Naive thymus-derived CD4-positive, alpha-beta T cell (primary cell): ENCODE measurements at regions of chr17 and their contacts with region 1.

Region 1: GRCh38 chr17:45148183-45149036 is at the start of gene HEXIM1:
- DNase-seq: peak; percentile 98 to 100 (median 100)
- ATAC-seq: peak; percentile 87
- H3K4me3 ChIP-seq: peak within 1 kb of the TSS; percentile 93
- H3K4me3 Mint-ChIP-seq: peak within 1 kb of the TSS; percentile 89 to 100 (median 99)
- H3K27ac ChIP-seq: peak within 1 kb of the TSS; percentile 91
- H3K27ac Mint-ChIP-seq: peak within 1 kb of the TSS; percentile 99 to 100 (median 100)
- H3K4me1 ChIP-seq: peaks cover 21 to 35% of the 10 kb centered on the region in 2 donors
- H3K4me1 Mint-ChIP-seq: peaks cover 18 to 68% (median 54%) of the 10 kb centered on the region in 7 donors
- H3K27me3 ChIP-seq: no peaks in the 10 kb centered on the region
- H3K27me3 Mint-ChIP-seq: peaks cover 0 to 7% (median 0%) of the 10 kb centered on the region in 5 donors
- total RNA-seq, gene HEXIM1: 28.5 to 41.3 (median 37.6) TPM

Region 2: GRCh38 chr17:44186307-44187130 is 961.9 kb before region 1 on chr17 and contains the start of gene TMUB2:
- CTCF ChIA-PET with region 1: no interaction called
- POLR2A ChIA-PET with region 1: no interaction called
- intact Hi-C with region 1: loop called in 1 of 2 experiments (anchors 2 kb)
- DNase-seq: peak; percentile 99 to 100 (median 100)
- ATAC-seq: peak; percentile 99
- H3K4me3 ChIP-seq: peak within 1 kb of the TSS; percentile 100
- H3K4me3 Mint-ChIP-seq: peak within 1 kb of the TSS; percentile 94 to 100 (median 98)
- H3K27ac ChIP-seq: peak within 1 kb of the TSS; percentile 99
- H3K27ac Mint-ChIP-seq: peak within 1 kb of the TSS; percentile 97 to 100 (median 100)
- H3K4me1 ChIP-seq: peaks cover 23 to 35% of the 10 kb centered on the region in 2 donors
- H3K4me1 Mint-ChIP-seq: peaks cover 41 to 68% (median 51%) of the 10 kb centered on the region in 7 donors
- H3K27me3 ChIP-seq: no peaks in the 10 kb centered on the region
- H3K27me3 Mint-ChIP-seq: no peaks in the 10 kb centered on the region
- total RNA-seq, gene TMUB2: 34.9 to 56.0 (median 41.6) TPM

Region 3: GRCh38 chr17:45060797-45061605 is 87.4 kb before region 1 on chr17 and contains the start of gene NMT1:
- CTCF ChIA-PET with region 1: no interaction called
- POLR2A ChIA-PET with region 1: no interaction called
- intact Hi-C with region 1: loop called (anchors 1 kb)
- DNase-seq: peak; percentile 81 to 98 (median 98)
- ATAC-seq: peak; percentile 95
- H3K4me3 ChIP-seq: peak within 1 kb of the TSS; percentile 97
- H3K4me3 Mint-ChIP-seq: peak within 1 kb of the TSS; percentile 80 to 100 (median 98)
- H3K27ac ChIP-seq: peak within 1 kb of the TSS; percentile 87
- H3K27ac Mint-ChIP-seq: peak within 1 kb of the TSS; percentile 88 to 99 (median 97)
- H3K4me1 ChIP-seq: peaks cover 18 to 20% of the 10 kb centered on the region in 2 donors
- H3K4me1 Mint-ChIP-seq: peaks cover 26 to 66% (median 53%) of the 10 kb centered on the region in 7 donors
- H3K27me3 ChIP-seq: no peaks in the 10 kb centered on the region
- H3K27me3 Mint-ChIP-seq: no peaks in the 10 kb centered on the region
- total RNA-seq, gene NMT1: 59.5 to 136 (median 121) TPM

Region 4: GRCh38 chr17:45073414-45074070 is 74.9 kb before region 1 on chr17:
- CTCF ChIA-PET with region 1: no interaction called
- POLR2A ChIA-PET with region 1: no interaction called
- intact Hi-C with region 1: no loop called
- DNase-seq: no peak
- ATAC-seq: no peak
- H3K4me3 ChIP-seq: no peak overlapping the region
- H3K4me3 Mint-ChIP-seq: no peak overlapping the region
- H3K27ac ChIP-seq: no peak overlapping the region
- H3K27ac Mint-ChIP-seq: peak overlapping the region in 1 of 9 donors; percentile 0
- H3K4me1 ChIP-seq: no peaks in the 10 kb centered on the region
- H3K4me1 Mint-ChIP-seq: peaks cover 17 to 41% (median 35%) of the 10 kb centered on the region in 7 donors
- H3K27me3 ChIP-seq: no peaks in the 10 kb centered on the region
- H3K27me3 Mint-ChIP-seq: no peaks in the 10 kb centered on the region

Region 5: DNA sequence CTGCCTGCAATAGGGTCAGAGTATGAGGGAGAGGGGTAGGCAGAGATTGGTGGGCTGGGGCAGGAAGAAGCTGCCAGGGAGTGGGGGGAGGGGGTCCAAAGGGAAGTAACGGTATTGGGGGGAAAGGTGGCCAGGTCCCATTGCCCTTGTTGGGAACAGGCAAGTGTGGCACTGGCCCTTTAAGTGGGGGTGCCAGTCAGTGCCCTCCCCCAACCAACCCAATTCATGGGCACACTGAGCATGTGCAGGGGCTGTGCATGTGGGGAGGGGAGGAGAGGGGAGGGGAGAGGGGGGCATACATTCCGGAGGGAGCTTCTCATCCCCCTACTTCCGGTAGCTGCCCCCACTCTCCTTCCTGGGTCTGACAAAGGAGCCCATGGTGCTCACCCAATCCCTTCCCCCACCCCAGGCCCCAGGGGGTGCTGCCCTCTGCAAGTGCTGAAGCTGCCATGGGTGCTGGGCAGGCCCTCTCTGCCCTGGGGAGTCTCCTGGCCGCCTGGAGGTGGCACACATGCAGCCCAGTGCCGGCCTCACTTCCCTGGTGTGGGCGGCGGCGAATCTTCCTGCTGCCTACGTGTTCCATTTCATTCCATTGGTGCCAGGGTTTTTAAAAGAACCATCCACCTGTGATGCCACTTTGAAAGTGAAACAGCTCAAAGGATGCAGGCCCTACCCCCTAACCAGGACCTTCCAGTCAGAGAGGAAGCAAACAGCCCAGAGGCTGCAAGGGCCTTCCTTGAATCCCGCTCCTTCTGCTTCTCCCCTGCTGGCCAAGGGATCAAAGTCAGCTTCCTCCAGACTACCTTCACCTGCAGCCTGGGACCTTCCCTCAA is 24.3 kb after region 1 on chr17:
- CTCF ChIA-PET with region 1: interaction called, 20 read pairs
- POLR2A ChIA-PET with region 1: interaction called, 62 read pairs
- intact Hi-C with region 1: loop called in 1 of 2 experiments (anchors 1 kb)
- DNase-seq: peak in 8 of 9 donors; percentile 45 to 61 (median 55)
- ATAC-seq: peak; percentile 79
- H3K4me3 ChIP-seq: peak overlapping the region; percentile 65
- H3K4me3 Mint-ChIP-seq: peak overlapping the region; percentile 71 to 95 (median 86)
- H3K27ac ChIP-seq: peak overlapping the region; percentile 63
- H3K27ac Mint-ChIP-seq: peak overlapping the region; percentile 63 to 98 (median 94)
- H3K4me1 ChIP-seq: peaks cover 7 to 14% of the 10 kb centered on the region in 2 donors
- H3K4me1 Mint-ChIP-seq: peaks cover 8 to 31% (median 24%) of the 10 kb centered on the region in 7 donors
- H3K27me3 ChIP-seq: no peaks in the 10 kb centered on the region
- H3K27me3 Mint-ChIP-seq: no peaks in the 10 kb centered on the region

Region 6: GRCh38 chr17:45228763-45229539 is 80.5 kb after region 1 on chr17:
- CTCF ChIA-PET with region 1: interaction called, 4 read pairs
- POLR2A ChIA-PET with region 1: interaction called, 108 read pairs
- intact Hi-C with region 1: loop called (anchors 1 kb)
- DNase-seq: peak; percentile 64 to 92 (median 74)
- ATAC-seq: peak; percentile 66
- H3K4me3 ChIP-seq: peak overlapping the region; percentile 91
- H3K4me3 Mint-ChIP-seq: peak overlapping the region; percentile 83 to 99 (median 96)
- H3K27ac ChIP-seq: peak overlapping the region; percentile 96
- H3K27ac Mint-ChIP-seq: peak overlapping the region; percentile 96 to 100 (median 99)
- H3K4me1 ChIP-seq: peaks cover 62 to 77% of the 10 kb centered on the region in 2 donors
- H3K4me1 Mint-ChIP-seq: peaks cover 54 to 91% (median 77%) of the 10 kb centered on the region in 7 donors
- H3K27me3 ChIP-seq: no peaks in the 10 kb centered on the region
- H3K27me3 Mint-ChIP-seq: no peaks in the 10 kb centered on the region

Region 7: GRCh38 chr17:45270828-45271418 is 122.5 kb after region 1 on chr17:
- CTCF ChIA-PET with region 1: no interaction called
- POLR2A ChIA-PET with region 1: no interaction called
- intact Hi-C with region 1: no loop called
- DNase-seq: peak; percentile 38 to 71 (median 55)
- ATAC-seq: peak; percentile 85
- H3K4me3 ChIP-seq: no peak overlapping the region
- H3K4me3 Mint-ChIP-seq: no peak overlapping the region
- H3K27ac ChIP-seq: no peak overlapping the region
- H3K27ac Mint-ChIP-seq: peak overlapping the region in 3 of 9 donors; percentile 6 to 32 (median 31)
- H3K4me1 ChIP-seq: no peaks in the 10 kb centered on the region
- H3K4me1 Mint-ChIP-seq: peaks cover 0 to 12% (median 0%) of the 10 kb centered on the region in 7 donors
- H3K27me3 ChIP-seq: no peaks in the 10 kb centered on the region
- H3K27me3 Mint-ChIP-seq: no peaks in the 10 kb centered on the region

Region 8: GRCh38 chr17:45413498-45413923 is 265.1 kb after region 1 on chr17:
- CTCF ChIA-PET with region 1: no interaction called
- POLR2A ChIA-PET with region 1: no interaction called
- intact Hi-C with region 1: no loop called
- DNase-seq: no peak
- ATAC-seq: peak; percentile 76
- H3K4me3 ChIP-seq: no peak overlapping the region
- H3K4me3 Mint-ChIP-seq: no peak overlapping the region
- H3K27ac ChIP-seq: no peak overlapping the region
- H3K27ac Mint-ChIP-seq: no peak overlapping the region
- H3K4me1 ChIP-seq: peaks cover 15 to 29% of the 10 kb centered on the region in 2 donors
- H3K4me1 Mint-ChIP-seq: peaks cover 25 to 45% (median 38%) of the 10 kb centered on the region in 7 donors
- H3K27me3 ChIP-seq: no peaks in the 10 kb centered on the region
- H3K27me3 Mint-ChIP-seq: no peaks in the 10 kb centered on the region

Region 9: DNA sequence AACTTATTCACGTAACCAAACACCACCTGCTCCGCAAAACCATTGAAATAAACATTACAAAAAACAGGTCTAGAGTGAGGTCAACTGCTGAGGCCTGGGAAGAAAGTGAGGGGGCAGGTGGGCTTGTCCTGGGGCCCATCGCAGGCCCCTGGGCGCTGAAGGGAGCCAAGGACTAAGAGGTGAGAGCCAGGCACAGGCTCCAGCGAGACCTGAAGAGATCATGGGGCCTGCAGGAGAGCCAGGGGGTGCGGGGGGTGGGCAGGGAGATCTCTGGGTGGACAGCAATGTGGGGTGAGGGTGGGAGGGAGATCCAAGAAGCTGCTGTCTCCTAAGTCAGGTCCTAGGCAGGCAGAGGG is 276.3 kb after region 1 on chr17:
- CTCF ChIA-PET with region 1: no interaction called
- POLR2A ChIA-PET with region 1: no interaction called
- intact Hi-C with region 1: no loop called
- DNase-seq: no peak
- ATAC-seq: no peak
- H3K4me3 ChIP-seq: no peak overlapping the region
- H3K4me3 Mint-ChIP-seq: no peak overlapping the region
- H3K27ac ChIP-seq: no peak overlapping the region
- H3K27ac Mint-ChIP-seq: no peak overlapping the region
- H3K4me1 ChIP-seq: peaks cover 7 to 11% of the 10 kb centered on the region in 2 donors
- H3K4me1 Mint-ChIP-seq: peaks cover 5 to 17% (median 15%) of the 10 kb centered on the region in 7 donors
- H3K27me3 ChIP-seq: no peaks in the 10 kb centered on the region
- H3K27me3 Mint-ChIP-seq: no peaks in the 10 kb centered on the region

Region 10: GRCh38 chr17:45584092-45585036 is 436.0 kb after region 1 on chr17:
- CTCF ChIA-PET with region 1: no interaction called
- POLR2A ChIA-PET with region 1: no interaction called
- intact Hi-C with region 1: loop called in 1 of 2 experiments (anchors 10 kb)
- DNase-seq: peak; percentile 59 to 84 (median 64)
- ATAC-seq: peak; percentile 59
- H3K4me3 ChIP-seq: peak overlapping the region; percentile 81
- H3K4me3 Mint-ChIP-seq: peak overlapping the region; percentile 85 to 99 (median 97)
- H3K27ac ChIP-seq: peak overlapping the region; percentile 85
- H3K27ac Mint-ChIP-seq: peak overlapping the region; percentile 90 to 99 (median 96)
- H3K4me1 ChIP-seq: peaks cover 8 to 11% of the 10 kb centered on the region in 2 donors
- H3K4me1 Mint-ChIP-seq: peaks cover 20 to 52% (median 47%) of the 10 kb centered on the region in 7 donors
- H3K27me3 ChIP-seq: no peaks in the 10 kb centered on the region
- H3K27me3 Mint-ChIP-seq: peaks cover 0 to 2% (median 0%) of the 10 kb centered on the region in 5 donors